Activated CD8-positive, alpha-beta T cell treated with anti-CD3 and anti-CD28 coated beads, Interleukin-2, amount 10 ng/mL, durations not matched to agents 7 days and 5 days (primary cell): ENCODE measurements at regions of chr2 and their contacts with region 1.

Region 1: DNA sequence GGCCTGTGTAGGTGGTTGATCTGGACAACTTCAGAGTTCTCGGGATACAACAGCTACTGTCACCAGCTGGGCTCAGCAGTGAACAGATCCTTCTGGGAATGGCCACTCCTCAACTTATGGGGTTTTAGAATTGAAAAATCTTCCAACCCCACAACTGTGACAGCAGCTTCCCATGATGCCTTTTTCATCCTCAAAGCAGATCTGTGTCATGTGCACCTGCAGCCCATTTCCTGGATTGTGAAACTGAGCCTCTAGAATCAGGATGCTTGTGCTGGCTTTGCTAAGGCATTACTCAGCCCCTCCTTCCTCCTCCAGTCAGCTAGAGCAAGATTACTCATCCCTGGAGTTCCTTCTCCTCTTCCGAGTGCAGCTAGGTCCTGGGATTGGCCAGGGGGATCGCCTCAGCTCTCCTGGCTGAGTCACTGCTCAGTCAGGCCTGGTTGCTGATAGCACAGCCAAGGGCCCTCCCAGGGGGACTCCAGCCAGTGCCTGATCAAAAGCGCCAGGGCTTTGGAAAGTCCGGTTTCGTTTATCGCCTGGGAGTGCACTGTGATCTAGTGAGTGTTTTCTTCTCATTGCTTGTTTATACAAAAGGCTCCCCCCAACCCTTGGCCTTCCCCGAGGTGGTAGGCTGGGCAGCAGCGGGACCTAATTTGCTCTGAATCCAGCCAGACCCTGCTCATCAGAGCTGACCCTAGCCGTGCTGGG is 2.4 kb upstream of the LPIN1 start:
- DNase-seq: peak; percentile 67
- ATAC-seq: peak; percentile 18
- H3K4me3 Mint-ChIP-seq: peak overlapping the region; percentile 61
- H3K27ac Mint-ChIP-seq: peak overlapping the region; percentile 89
- H3K4me1 Mint-ChIP-seq: peaks cover 51% of the 10 kb centered on the region
- H3K27me3 Mint-ChIP-seq: no peaks in the 10 kb centered on the region

Region 2: GRCh38 chr2:11562011-11562410 is 182.0 kb before region 1 on chr2:
- CTCF ChIA-PET with region 1: no interaction called
- POLR2A ChIA-PET with region 1: no interaction called
- DNase-seq: no peak
- ATAC-seq: no peak
- H3K4me3 Mint-ChIP-seq: no peak overlapping the region
- H3K27ac Mint-ChIP-seq: no peak overlapping the region
- H3K4me1 Mint-ChIP-seq: no peaks in the 10 kb centered on the region
- H3K27me3 Mint-ChIP-seq: peaks cover 7% of the 10 kb centered on the region

Region 3: DNA sequence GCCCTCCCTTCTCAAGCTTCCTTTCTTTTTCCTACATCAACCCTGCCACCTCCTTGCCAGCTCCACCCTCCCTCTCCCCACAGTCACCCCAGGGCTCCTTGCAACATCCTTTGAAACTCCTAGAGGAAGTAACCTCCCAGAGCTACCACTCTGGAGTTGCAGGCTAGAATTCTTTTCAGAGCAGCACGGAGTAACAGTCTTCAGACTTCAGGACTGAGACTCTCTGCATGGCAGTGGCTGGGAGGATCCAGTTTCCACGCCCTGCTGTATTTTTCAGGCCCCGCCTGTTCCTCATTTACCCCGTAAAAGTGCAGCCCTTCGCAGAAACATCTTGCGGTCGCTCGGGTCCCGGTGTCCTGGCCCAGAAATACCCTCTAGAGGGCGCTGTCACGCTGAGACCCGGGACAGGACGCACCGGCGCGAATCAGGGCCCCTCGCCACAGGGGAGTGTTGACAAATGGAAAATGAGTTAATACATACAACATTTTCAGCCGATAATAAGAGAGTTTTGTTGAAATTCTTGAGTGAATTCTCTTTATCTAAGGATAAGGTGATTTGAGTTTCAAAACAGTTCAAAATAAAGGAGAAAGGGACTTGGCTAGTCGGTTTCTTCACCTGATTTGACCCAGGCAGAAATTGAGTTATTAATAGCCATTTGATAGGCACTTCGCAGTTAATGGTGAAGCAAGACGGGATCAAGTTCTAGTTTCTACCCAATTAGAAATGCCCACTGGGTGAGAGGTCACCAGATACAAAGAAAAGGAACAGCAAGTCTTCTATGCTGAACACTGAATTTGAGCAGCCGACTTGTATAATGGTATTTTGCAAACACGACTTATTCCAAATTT is 55.6 kb before region 1 on chr2:
- CTCF ChIA-PET with region 1: interaction called, 17 read pairs
- POLR2A ChIA-PET with region 1: interaction called, 3 read pairs
- DNase-seq: peak; percentile 94
- ATAC-seq: peak; percentile 98
- H3K4me3 Mint-ChIP-seq: peak overlapping the region; percentile 58
- H3K27ac Mint-ChIP-seq: peak overlapping the region; percentile 72
- H3K4me1 Mint-ChIP-seq: peaks cover 21% of the 10 kb centered on the region
- H3K27me3 Mint-ChIP-seq: peaks cover 15% of the 10 kb centered on the region

Region 4: DNA sequence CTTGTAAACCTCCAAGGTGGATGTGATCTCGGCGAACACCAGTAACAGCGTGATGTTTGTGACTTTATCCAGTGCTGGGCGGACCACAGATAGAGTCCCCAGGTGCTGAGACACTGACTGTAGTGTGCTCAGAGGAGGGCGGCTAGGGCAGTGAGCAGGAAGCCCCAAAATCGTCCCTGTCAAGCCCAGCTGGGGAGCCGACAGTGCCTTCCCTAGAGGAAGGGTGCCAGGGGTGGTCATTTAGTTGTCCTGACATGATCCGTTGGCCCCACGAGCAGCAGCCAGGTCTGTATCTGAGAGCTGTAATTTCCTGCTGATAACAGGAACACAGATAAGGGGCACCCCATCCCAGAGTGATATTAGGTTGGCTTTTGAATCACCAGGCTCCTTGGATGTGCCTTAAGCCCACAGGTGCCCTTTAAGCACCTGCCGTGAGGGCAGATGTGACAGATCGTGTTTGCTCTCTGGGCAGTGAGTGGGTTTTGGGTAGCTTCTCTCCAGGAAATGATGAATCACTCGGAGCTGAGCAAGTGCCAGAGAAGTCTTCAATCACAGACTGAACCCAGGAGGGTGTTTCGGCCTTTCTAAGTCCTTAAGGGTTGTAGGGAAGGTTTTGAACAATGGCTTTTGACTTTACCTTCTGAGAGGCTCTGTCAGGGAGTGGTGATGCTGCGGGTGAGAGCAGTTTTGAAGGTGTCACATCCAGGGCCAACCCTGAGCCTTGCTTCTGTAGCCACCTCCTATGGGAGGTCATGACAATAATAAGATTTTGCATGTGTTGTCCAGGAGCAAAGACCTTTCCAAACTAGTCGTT is 10.1 kb after region 1 on chr2:
- CTCF ChIA-PET with region 1: interaction called, 26 read pairs
- POLR2A ChIA-PET with region 1: interaction called, 16 read pairs
- DNase-seq: peak; percentile 74
- ATAC-seq: peak; percentile 67
- H3K4me3 Mint-ChIP-seq: peak overlapping the region; percentile 73
- H3K27ac Mint-ChIP-seq: peak overlapping the region; percentile 93
- H3K4me1 Mint-ChIP-seq: peaks cover 93% of the 10 kb centered on the region
- H3K27me3 Mint-ChIP-seq: no peaks in the 10 kb centered on the region

Region 5: DNA sequence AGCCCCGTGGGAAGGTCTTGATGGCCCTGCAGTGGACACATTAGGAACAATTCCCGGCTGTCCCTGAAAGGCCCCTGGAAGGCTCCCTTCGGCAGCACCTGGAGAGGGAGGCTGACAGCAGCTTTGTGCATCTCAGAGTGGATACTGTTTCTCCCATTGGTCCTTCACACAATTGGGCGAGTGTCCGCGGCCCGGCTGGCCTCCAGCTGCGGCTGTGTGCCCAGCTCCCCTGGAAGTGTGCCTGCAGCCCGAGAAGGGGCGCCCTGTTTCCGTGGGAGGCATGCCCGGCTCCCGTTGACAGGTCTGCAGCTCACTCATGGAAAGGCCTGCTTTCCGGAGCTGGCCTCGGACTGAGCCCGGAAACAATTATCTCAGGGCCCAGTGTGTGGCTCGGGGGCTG is 106.1 kb after region 1 on chr2:
- CTCF ChIA-PET with region 1: no interaction called
- POLR2A ChIA-PET with region 1: no interaction called
- DNase-seq: no peak
- ATAC-seq: no peak
- H3K4me3 Mint-ChIP-seq: no peak overlapping the region
- H3K27ac Mint-ChIP-seq: no peak overlapping the region
- H3K4me1 Mint-ChIP-seq: no peaks in the 10 kb centered on the region
- H3K27me3 Mint-ChIP-seq: peaks cover 3% of the 10 kb centered on the region